Activated T-helper 1 cell treated with anti-CD3 and anti-CD28 coated beads, Interleukin-12 subunit alpha, Interleukin-12 subunit beta, Interleukin-2, Interleukin-4 antibody, amounts not matched to agents 30 ng/mL and 10 ng/mL and 1 ng/mL, durations not matched to agents 14 hours and 24 hours and 36 hours (primary cell): ENCODE measurements at regions of chr19 and their contacts with region 1.

Region 1: DNA sequence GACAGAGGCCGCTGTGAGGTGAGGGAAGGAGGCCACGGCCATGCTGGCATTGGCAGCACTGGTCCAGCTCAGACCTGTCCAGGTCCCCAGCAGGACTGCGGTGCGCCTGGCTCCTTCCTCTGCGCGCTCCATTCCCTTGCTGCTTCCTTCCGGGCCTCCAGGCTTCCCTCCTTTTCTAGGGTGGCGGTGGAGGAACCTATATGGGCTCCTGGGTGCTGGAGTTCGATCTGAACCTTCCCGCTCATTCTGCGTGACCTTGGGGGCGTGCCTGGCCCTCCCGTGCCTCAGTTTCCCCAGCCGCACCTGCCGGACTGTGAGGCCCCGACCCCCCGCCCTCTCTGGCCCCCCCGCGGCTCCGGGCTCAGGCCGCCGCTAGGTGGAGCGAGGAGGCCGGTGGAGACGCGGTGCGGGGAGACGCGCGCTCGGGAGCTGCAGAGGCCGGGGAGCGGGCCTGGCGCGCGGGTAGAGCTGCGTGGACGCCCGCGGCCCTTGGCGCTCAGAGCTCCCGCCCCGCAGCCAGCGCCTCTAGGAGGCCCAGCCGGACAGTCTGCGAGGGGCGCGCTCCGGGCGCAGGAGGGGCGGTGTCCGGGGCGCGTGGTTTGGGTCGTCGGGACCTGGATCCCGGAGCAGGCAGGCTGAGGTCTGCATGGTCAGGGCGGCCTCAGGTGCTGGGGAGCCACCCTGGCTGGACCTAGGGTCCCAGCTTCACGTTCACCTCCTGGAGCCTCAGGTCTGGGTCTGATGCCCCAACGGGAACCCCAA is 30.0 kb downstream of the EFNA2 start:
- DNase-seq: no peak
- H3K4me3 Mint-ChIP-seq: no peak overlapping the region
- H3K27ac Mint-ChIP-seq: no peak overlapping the region
- H3K4me1 Mint-ChIP-seq: no peaks in the 10 kb centered on the region
- H3K27me3 Mint-ChIP-seq: peaks cover 11% of the 10 kb centered on the region

Region 2: DNA sequence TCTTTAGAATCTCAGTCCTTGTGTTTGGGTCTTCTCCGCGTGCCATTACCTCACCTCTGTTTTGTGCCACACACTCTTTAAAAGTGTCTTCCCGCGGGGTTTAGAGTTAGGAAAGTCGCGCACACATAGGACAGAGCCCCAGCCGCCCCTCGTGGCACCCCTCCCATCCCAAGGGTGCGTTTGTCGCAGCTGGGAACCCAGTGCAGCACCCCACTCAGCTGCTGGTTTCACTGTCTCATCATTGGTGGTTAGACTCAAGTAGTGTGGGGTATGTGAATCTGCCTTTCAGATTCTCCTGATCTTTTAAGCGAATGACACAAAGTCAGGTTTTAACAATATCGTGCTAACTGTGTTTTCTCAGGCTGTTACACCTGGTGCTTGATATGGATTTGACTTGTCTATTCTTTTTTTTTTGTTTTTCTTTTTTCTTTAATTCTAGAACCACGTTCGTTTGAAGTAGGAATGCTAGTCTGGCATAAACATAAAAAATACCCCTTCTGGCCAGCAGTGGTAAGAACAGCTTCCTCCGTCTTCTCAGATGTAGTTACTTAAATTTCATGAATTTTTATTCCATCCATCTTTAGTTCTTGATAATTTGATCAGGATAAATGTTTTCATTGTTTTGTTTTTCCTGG is 48.5 kb after region 1 on chr19:
- intact Hi-C with region 1: loop called (anchors 1 kb)
- DNase-seq: no peak
- H3K4me3 Mint-ChIP-seq: peak overlapping the region; percentile 55
- H3K27ac Mint-ChIP-seq: peak overlapping the region; percentile 71
- H3K4me1 Mint-ChIP-seq: peaks cover 28% of the 10 kb centered on the region
- H3K27me3 Mint-ChIP-seq: no peaks in the 10 kb centered on the region